ENCODE measurements at regions of chr14 and their contacts with region 1.

Region 1: GRCh38 chr14:30656190-30656632 is 34.1 kb downstream of the SCFD1 start:
- DNase-seq: peak; percentile 52
- H3K4me3 ChIP-seq: no peak overlapping the region
- H3K27ac ChIP-seq: no peak overlapping the region
- H3K4me1 ChIP-seq: no peaks in the 10 kb centered on the region
- H3K27me3 ChIP-seq: no peaks in the 10 kb centered on the region
- CTCF ChIP-seq: peak; percentile 83

Region 2: GRCh38 chr14:30803185-30803584 is 147.0 kb after region 1 on chr14:
- CTCF ChIA-PET with region 1: no interaction called
- POLR2A ChIA-PET with region 1: no interaction called
- intact Hi-C with region 1: no loop called
- DNase-seq: no peak
- H3K4me3 ChIP-seq: no peak overlapping the region
- H3K27ac ChIP-seq: no peak overlapping the region
- H3K4me1 ChIP-seq: no peaks in the 10 kb centered on the region
- H3K27me3 ChIP-seq: no peaks in the 10 kb centered on the region
- CTCF ChIP-seq: no peak

Region 3: GRCh38 chr14:30906752-30907658 is 250.8 kb after region 1 on chr14:
- CTCF ChIA-PET with region 1: no interaction called
- POLR2A ChIA-PET with region 1: no interaction called
- intact Hi-C with region 1: loop called (anchors 1 kb)
- DNase-seq: peak; percentile 40
- H3K4me3 ChIP-seq: no peak overlapping the region
- H3K27ac ChIP-seq: no peak overlapping the region
- H3K4me1 ChIP-seq: no peaks in the 10 kb centered on the region
- H3K27me3 ChIP-seq: no peaks in the 10 kb centered on the region
- CTCF ChIP-seq: peak; percentile 61

Region 4: DNA sequence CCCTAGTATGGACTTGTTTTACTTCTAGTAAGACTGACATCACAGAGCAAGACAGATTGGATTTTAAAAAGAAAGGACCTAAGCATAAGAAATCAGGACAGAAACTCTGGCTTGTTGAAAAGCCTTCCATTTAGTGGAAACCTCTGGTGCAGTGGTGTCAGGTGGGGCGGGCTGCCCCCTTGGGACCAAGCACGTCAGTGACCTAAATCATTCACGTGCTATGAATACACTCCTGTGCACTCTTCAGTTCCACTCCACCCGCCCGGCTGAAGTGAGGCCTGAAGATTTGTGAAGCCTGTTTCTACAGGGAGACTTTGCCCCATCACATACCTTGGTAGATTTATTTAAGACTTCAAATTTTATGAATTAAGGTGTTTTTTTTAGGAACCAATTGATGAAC is 428.2 kb after region 1 on chr14:
- CTCF ChIA-PET with region 1: interaction called, 3 read pairs
- POLR2A ChIA-PET with region 1: no interaction called
- intact Hi-C with region 1: loop called (anchors 10 kb)
- DNase-seq: no peak
- H3K4me3 ChIP-seq: no peak overlapping the region
- H3K27ac ChIP-seq: no peak overlapping the region
- H3K4me1 ChIP-seq: no peaks in the 10 kb centered on the region
- H3K27me3 ChIP-seq: no peaks in the 10 kb centered on the region
- CTCF ChIP-seq: no peak

Region 5: GRCh38 chr14:31360919-31361662 is 704.9 kb after region 1 on chr14:
- CTCF ChIA-PET with region 1: no interaction called
- POLR2A ChIA-PET with region 1: no interaction called
- intact Hi-C with region 1: loop called (anchors 2 kb)
- DNase-seq: peak; percentile 19
- H3K4me3 ChIP-seq: no peak overlapping the region
- H3K27ac ChIP-seq: no peak overlapping the region
- H3K4me1 ChIP-seq: no peaks in the 10 kb centered on the region
- H3K27me3 ChIP-seq: no peaks in the 10 kb centered on the region
- CTCF ChIP-seq: no peak

Region 6: GRCh38 chr14:32560209-32560857 is 1904.1 kb after region 1 on chr14:
- CTCF ChIA-PET with region 1: no interaction called
- POLR2A ChIA-PET with region 1: no interaction called
- intact Hi-C with region 1: loop called (anchors 5 kb)
- DNase-seq: peak; percentile 79
- H3K4me3 ChIP-seq: no peak overlapping the region
- H3K27ac ChIP-seq: no peak overlapping the region
- H3K4me1 ChIP-seq: peaks cover 16% of the 10 kb centered on the region
- H3K27me3 ChIP-seq: no peaks in the 10 kb centered on the region
- CTCF ChIP-seq: peak; percentile 95